Naive thymus-derived CD4-positive, alpha-beta T cell (primary cell): ENCODE measurements at regions of chr11 and their contacts with region 1.

Region 1: DNA sequence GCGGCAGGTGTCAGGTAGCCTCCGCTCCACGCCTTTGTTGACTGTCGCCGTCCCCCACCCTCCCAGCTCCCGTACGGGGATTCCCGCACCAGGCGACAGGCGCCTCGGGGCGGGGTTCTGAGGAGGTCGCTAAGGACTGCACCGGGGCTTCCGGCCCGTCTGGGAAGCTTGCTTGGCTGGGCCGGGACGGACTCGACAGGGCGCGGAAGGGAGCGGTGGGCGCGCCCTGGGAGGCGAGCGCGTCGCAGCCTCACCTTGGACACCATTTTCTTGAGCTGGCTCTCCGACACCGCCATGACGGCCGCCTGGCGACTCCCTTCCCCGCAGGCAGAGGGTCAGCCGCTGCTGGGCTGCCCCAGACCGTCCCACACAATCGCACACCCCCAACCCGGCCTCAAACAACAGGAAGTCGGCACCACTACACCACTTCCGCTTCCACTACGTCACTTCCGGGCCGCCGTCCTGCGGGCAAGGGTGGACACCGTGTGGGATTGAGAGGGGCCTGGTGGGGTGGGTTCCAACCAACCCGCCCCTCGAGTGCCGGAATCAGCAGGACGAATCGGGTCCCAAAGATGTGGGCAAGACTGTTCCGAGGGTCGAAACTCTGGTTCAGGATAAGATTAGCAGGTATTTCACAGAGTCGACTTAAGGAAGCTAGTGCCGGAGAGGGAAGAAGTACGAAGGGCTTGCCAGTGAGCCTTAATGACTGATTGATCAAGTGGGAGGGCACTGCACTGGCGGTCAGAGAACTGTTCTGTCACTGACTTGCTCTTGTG is at the start of gene TSG101:
- DNase-seq: peak; percentile 86 to 96 (median 91)
- ATAC-seq: peak; percentile 91
- H3K4me3 ChIP-seq: peak within 1 kb of the TSS; percentile 94
- H3K4me3 Mint-ChIP-seq: peak within 1 kb of the TSS; percentile 93 to 100 (median 100)
- H3K27ac ChIP-seq: peak within 1 kb of the TSS; percentile 96
- H3K27ac Mint-ChIP-seq: peak within 1 kb of the TSS; percentile 99 to 100 (median 100)
- H3K4me1 ChIP-seq: peaks cover 18% of the 10 kb centered on the region in 2 donors
- H3K4me1 Mint-ChIP-seq: peaks cover 28 to 67% (median 55%) of the 10 kb centered on the region in 7 donors
- H3K27me3 ChIP-seq: no peaks in the 10 kb centered on the region
- H3K27me3 Mint-ChIP-seq: peaks cover 0 to 3% (median 0%) of the 10 kb centered on the region in 5 donors
- total RNA-seq, gene TSG101: 16.8 to 46.3 (median 36.3) TPM

Region 2: DNA sequence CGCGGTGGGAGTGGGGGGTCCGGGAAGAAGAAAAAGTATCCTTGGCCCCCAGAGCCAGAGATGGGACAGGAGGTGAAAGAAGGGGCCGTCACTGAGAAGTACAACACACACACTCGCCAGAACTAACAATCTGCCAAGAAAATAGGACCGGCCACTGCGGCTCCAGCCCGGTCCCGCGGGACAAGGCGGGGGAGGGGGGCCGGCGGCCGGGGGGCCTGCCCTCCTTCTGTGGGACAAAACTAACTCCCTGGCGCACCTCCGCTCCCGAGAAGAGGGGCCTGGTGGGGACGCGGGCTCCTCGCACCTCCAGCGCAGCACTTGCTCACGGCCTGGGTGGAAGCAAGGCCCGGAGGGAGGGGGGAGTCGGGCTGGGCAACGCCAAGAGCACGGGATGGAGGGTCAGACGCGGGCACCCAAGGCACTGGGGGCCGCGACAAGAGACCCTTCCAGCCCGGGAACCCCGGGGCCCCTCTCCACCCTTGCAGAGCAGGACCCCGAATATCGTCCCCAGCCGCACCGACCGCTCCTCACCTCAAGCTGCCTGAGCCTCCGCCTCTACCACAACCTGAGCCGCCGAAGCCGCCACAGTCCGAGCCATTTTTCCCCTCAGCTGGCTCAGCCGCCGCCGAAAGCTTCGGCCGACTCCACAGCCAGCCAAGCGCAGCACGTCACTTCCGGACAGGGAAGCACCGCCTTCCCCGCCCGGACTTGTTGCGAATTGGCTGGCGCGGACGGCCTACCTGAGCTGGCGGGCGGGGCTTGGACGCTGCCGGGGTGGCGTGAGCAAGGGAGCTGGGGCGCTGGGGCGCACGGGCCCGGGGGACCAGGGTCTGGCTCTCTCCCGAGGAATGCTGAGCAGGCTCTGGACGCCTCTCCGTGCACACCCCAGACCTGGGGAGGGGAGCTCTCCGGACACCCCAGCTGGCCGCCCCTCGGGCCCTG is 1319.1 kb before region 1 on chr11 and contains the start of gene PIK3C2A:
- CTCF ChIA-PET with region 1: no interaction called
- POLR2A ChIA-PET with region 1: no interaction called
- intact Hi-C with region 1: loop called in 1 of 2 experiments (anchors 10 kb)
- DNase-seq: peak; percentile 84 to 94 (median 91)
- ATAC-seq: peak; percentile 98
- H3K4me3 ChIP-seq: peak within 1 kb of the TSS; percentile 93
- H3K4me3 Mint-ChIP-seq: peak within 1 kb of the TSS; percentile 90 to 99 (median 98)
- H3K27ac ChIP-seq: peak within 1 kb of the TSS; percentile 93
- H3K27ac Mint-ChIP-seq: peak within 1 kb of the TSS; percentile 87 to 99 (median 97)
- H3K4me1 ChIP-seq: peaks cover 15 to 19% of the 10 kb centered on the region in 2 donors
- H3K4me1 Mint-ChIP-seq: peaks cover 34 to 57% (median 48%) of the 10 kb centered on the region in 7 donors
- H3K27me3 ChIP-seq: no peaks in the 10 kb centered on the region
- H3K27me3 Mint-ChIP-seq: no peaks in the 10 kb centered on the region
- total RNA-seq, gene PIK3C2A: 25.4 to 56.4 (median 42.0) TPM

Region 3: GRCh38 chr11:18115360-18116127 is 411.2 kb before region 1 on chr11:
- CTCF ChIA-PET with region 1: no interaction called
- POLR2A ChIA-PET with region 1: no interaction called
- intact Hi-C with region 1: loop called in 1 of 2 experiments (anchors 2 kb)
- DNase-seq: peak; percentile 37 to 67 (median 63)
- ATAC-seq: peak; percentile 92
- H3K4me3 ChIP-seq: no peak overlapping the region
- H3K4me3 Mint-ChIP-seq: no peak overlapping the region
- H3K27ac ChIP-seq: no peak overlapping the region
- H3K27ac Mint-ChIP-seq: no peak overlapping the region
- H3K4me1 ChIP-seq: no peaks in the 10 kb centered on the region
- H3K4me1 Mint-ChIP-seq: peaks cover 0 to 5% (median 0%) of the 10 kb centered on the region in 7 donors
- H3K27me3 ChIP-seq: no peaks in the 10 kb centered on the region
- H3K27me3 Mint-ChIP-seq: peaks cover 17 to 40% (median 29%) of the 10 kb centered on the region in 5 donors

Region 4: DNA sequence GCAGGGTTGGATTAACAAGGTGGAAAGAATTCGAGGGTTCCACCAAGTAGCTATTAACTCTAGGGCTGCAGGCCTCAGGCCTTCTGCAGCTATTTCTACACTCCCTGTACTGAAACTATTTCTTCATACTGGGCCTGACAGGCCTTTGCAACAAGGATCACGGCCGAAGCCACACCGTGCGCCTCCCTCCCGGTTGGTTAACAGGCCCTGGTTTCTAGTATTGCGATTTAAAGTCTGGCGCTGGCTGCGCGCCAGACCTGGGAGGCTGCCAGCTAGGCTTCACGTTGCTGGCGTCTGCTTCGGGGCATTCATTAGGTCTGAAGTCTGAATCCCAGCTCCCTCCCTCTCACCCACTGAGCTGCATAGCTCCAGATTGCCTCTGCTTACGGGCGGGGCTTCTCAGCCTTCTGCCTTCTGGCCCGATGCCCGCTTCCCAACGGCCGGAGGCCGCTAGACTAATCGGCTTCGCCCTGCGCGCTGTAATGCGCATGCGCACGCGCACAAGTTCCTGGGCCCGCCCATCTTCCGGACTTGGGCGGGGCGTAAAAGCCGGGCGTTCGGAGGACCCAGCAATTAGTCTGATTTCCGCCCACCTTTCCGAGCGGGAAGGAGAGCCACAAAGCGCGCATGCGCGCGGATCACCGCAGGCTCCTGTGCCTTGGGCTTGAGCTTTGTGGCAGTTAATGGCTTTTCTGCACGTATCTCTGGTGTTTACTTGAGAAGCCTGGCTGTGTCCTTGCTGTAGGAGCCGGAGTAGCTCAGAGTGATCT is 130.8 kb before region 1 on chr11:
- CTCF ChIA-PET with region 1: interaction called, 3 read pairs
- POLR2A ChIA-PET with region 1: interaction called, 34 read pairs
- intact Hi-C with region 1: loop called (anchors 1 kb)
- DNase-seq: peak; percentile 87 to 98 (median 95)
- ATAC-seq: peak; percentile 78
- H3K4me3 ChIP-seq: peak overlapping the region; percentile 78
- H3K4me3 Mint-ChIP-seq: peak overlapping the region; percentile 96 to 99 (median 98)
- H3K27ac ChIP-seq: peak overlapping the region; percentile 95
- H3K27ac Mint-ChIP-seq: peak overlapping the region; percentile 94 to 98 (median 96)
- H3K4me1 ChIP-seq: peaks cover 12 to 14% of the 10 kb centered on the region in 2 donors
- H3K4me1 Mint-ChIP-seq: peaks cover 14 to 63% (median 32%) of the 10 kb centered on the region in 7 donors
- H3K27me3 ChIP-seq: no peaks in the 10 kb centered on the region
- H3K27me3 Mint-ChIP-seq: no peaks in the 10 kb centered on the region

Region 5: DNA sequence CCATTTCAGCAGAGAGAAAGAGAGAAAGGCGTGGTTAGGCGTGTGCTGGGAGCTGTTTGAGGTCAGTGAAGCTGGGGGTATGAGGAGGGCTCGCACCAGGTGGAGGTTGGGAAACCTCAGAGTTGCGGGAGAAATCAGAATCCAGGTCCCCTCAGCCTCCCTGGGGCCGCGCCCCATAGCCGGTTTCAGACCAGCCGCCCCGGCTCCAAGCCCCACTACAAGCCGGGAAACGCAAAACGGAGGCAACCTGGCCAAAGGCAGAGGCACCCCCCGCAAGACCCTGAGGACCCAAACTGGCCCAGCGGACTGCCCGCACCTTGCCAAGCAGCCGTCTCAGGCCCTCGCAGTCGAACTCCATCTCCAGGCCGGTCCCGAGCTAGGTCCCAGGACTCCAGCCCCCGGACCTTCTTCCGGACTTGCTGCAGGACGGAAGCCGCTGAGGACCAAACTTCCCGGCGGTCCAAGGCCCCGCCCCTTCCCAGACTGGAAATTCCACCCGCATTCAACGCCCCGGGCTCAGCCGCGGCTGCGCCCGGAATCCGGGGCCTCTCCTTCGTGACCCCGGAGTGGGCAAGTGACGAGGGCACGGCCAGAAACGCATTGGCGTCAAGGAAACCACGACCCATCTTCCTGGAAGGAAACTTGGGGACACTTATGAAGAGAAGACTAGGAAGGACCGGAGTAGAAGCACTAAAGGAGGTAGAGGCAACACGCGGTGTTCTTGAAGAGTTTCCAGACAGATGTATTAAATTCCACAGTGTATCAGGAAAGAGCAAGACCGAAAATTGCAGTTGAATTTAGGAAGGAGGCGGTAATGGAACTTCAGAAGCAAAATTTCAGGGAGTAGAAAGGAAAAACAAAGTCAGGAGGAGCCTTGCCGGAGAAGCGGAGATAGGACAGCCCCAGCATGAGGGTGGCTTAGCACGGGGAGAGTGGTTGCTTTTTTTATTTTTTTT is 61.9 kb after region 1 on chr11 and contains the start of gene UEVLD:
- CTCF ChIA-PET with region 1: no interaction called
- POLR2A ChIA-PET with region 1: no interaction called
- intact Hi-C with region 1: loop called in 1 of 2 experiments (anchors 1 kb)
- DNase-seq: peak; percentile 18 to 82 (median 23)
- ATAC-seq: peak; percentile 62
- H3K4me3 ChIP-seq: peak within 1 kb of the TSS; percentile 63
- H3K4me3 Mint-ChIP-seq: no peak within 1 kb of the TSS
- H3K27ac ChIP-seq: peak within 1 kb of the TSS; percentile 68
- H3K27ac Mint-ChIP-seq: no peak within 1 kb of the TSS
- H3K4me1 ChIP-seq: peaks cover 8 to 15% of the 10 kb centered on the region in 2 donors
- H3K4me1 Mint-ChIP-seq: peaks cover 0 to 19% (median 0%) of the 10 kb centered on the region in 7 donors
- H3K27me3 ChIP-seq: no peaks in the 10 kb centered on the region
- H3K27me3 Mint-ChIP-seq: no peaks in the 10 kb centered on the region
- total RNA-seq, gene UEVLD: 3.6 to 19.8 (median 5.8) TPM

Region 6: GRCh38 chr11:18698341-18699268 is 171.9 kb after region 1 on chr11 and contains the start of gene TMEM86A:
- CTCF ChIA-PET with region 1: no interaction called
- POLR2A ChIA-PET with region 1: interaction called, 3 read pairs
- intact Hi-C with region 1: loop called in 1 of 2 experiments (anchors 1 kb)
- DNase-seq: peak; percentile 81 to 89 (median 87)
- ATAC-seq: peak; percentile 97
- H3K4me3 ChIP-seq: peak within 1 kb of the TSS; percentile 42
- H3K4me3 Mint-ChIP-seq: peak within 1 kb of the TSS; percentile 76 to 89 (median 84)
- H3K27ac ChIP-seq: peak within 1 kb of the TSS; percentile 72
- H3K27ac Mint-ChIP-seq: peak within 1 kb of the TSS; percentile 42 to 95 (median 89)
- H3K4me1 ChIP-seq: peaks cover 6% of the 10 kb centered on the region in 2 donors
- H3K4me1 Mint-ChIP-seq: peaks cover 14 to 27% (median 20%) of the 10 kb centered on the region in 7 donors
- H3K27me3 ChIP-seq: no peaks in the 10 kb centered on the region
- H3K27me3 Mint-ChIP-seq: peaks cover 0 to 39% (median 0%) of the 10 kb centered on the region in 5 donors
- total RNA-seq, gene TMEM86A: 0.53 to 6.5 (median 5.5) TPM

Region 7: DNA sequence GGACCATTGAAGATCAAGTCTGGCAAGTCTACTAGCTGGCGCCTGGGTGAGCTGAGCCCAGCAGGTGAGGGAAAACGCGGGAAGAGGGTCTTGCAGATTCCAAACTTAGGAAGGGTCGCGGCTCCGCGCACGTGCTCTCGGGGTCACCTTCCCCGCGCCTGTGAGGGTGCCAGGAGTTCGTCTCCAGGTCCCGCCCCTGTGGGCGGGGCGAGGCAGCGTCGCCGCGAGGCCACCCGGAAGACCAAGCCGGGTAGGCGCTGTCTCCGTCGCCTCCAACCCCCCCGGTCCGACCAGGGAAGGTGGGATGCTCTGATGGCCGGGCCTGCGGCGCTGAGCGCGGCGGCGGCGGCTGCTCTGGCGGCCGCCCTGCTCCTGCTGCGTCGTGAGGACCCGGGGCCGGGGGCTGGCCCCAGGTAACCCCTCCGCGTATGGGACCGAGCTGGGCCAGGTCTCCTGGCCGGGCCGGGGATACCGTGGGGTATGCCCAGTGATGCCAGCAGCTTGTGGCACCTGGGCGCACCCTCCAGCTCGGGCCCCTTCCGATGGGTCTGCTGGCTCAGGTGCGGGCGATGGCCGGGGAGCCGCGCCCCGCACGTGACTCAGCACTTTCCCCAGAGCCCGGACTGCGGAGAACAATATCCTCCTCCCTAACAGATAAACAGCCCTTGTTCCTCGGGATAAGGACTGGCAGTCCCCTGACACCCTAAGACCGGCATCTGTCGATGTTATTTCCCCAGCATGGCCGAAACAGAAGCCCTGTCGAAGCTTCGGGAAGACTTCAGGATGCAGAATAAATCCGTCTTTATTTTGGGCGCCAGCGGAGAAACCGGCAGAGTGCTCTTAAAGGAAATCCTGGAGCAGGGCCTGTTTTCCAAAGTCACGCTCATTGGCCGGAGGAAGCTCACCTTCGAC is 1837.0 kb after region 1 on chr11 and contains the start of gene HTATIP2:
- CTCF ChIA-PET with region 1: no interaction called
- POLR2A ChIA-PET with region 1: no interaction called
- intact Hi-C with region 1: loop called in 1 of 2 experiments (anchors 5 kb)
- DNase-seq: peak; percentile 62 to 78 (median 72)
- ATAC-seq: peak; percentile 92
- H3K4me3 ChIP-seq: peak within 1 kb of the TSS; percentile 73
- H3K4me3 Mint-ChIP-seq: peak within 1 kb of the TSS; percentile 88 to 96 (median 94)
- H3K27ac ChIP-seq: peak within 1 kb of the TSS; percentile 77
- H3K27ac Mint-ChIP-seq: peak within 1 kb of the TSS; percentile 87 to 97 (median 93)
- H3K4me1 ChIP-seq: peaks cover 27 to 29% of the 10 kb centered on the region in 2 donors
- H3K4me1 Mint-ChIP-seq: peaks cover 33 to 75% (median 72%) of the 10 kb centered on the region in 7 donors
- H3K27me3 ChIP-seq: no peaks in the 10 kb centered on the region
- H3K27me3 Mint-ChIP-seq: no peaks in the 10 kb centered on the region
- total RNA-seq, gene HTATIP2: 12.0 to 47.1 (median 38.6) TPM